CD4-positive, alpha-beta memory T cell (primary cell): ENCODE measurements at regions of chr1 and their contacts with region 1.

Region 1: DNA sequence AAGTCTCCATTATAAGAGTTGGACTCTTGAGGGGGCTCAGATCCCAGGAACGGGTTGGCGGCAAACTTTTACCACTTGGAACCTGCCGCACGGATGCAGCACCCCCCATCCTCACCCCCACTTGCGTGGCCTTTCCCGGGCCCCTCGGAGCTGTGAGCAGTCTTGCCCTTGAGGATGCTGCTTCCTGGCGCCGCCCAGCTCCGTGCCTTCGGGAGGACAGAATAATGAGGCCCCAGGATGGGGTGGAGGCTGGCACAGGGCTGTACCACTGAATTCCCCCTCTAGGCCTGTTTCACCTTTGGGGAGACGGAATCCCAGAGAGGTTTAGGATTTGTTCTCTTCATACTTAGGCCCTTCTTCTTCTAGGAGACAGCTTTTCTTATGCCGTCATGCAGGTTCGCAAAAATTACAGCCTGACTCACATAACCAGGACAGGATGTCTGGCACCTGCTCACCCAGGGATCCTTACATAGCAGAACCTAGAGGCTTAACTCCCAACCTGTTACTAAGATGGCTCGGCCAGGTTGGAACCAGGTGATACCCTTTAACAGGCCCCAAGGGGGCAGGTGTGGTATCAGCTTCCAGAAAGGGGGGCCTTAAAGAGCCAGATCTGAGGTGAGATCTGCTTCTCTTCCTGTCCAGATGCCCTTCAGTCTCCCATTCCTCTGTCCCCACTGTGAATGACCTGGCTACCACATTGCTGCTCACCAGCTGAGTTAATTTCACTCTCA is 1.5 kb downstream of the TRNP1 start:
- DNase-seq: no peak
- H3K4me3 ChIP-seq: peak overlapping the region in 1 of 2 donors; percentile 19
- H3K4me3 Mint-ChIP-seq: peak overlapping the region; percentile 59 to 90 (median 79)
- H3K27ac ChIP-seq: no peak overlapping the region
- H3K27ac Mint-ChIP-seq: peak overlapping the region in 1 of 7 donors; percentile 52
- H3K4me1 ChIP-seq: peaks cover 13% of the 10 kb centered on the region
- H3K4me1 Mint-ChIP-seq: peaks cover 6 to 25% (median 10%) of the 10 kb centered on the region in 4 donors
- H3K27me3 ChIP-seq: peaks cover 14% of the 10 kb centered on the region
- H3K27me3 Mint-ChIP-seq: peaks cover 25 to 27% of the 10 kb centered on the region in 2 donors

Region 2: GRCh38 chr1:26874896-26875295 is 120.1 kb before region 1 on chr1:
- CTCF ChIA-PET with region 1: no interaction called
- POLR2A ChIA-PET with region 1: no interaction called
- intact Hi-C with region 1: no loop called
- DNase-seq: no peak
- H3K4me3 ChIP-seq: no peak overlapping the region
- H3K4me3 Mint-ChIP-seq: no peak overlapping the region
- H3K27ac ChIP-seq: no peak overlapping the region
- H3K27ac Mint-ChIP-seq: peak overlapping the region in 2 of 7 donors; percentile 2 to 30
- H3K4me1 ChIP-seq: no peaks in the 10 kb centered on the region
- H3K4me1 Mint-ChIP-seq: peaks cover 0 to 1% (median 0%) of the 10 kb centered on the region in 4 donors
- H3K27me3 ChIP-seq: no peaks in the 10 kb centered on the region
- H3K27me3 Mint-ChIP-seq: no peaks in the 10 kb centered on the region

Region 3: GRCh38 chr1:27097484-27097917 is 102.5 kb after region 1 on chr1:
- CTCF ChIA-PET with region 1: interaction called, 3 read pairs
- POLR2A ChIA-PET with region 1: no interaction called
- intact Hi-C with region 1: loop called (anchors 1 kb)
- DNase-seq: peak; percentile 64 to 72 (median 68)
- H3K4me3 ChIP-seq: no peak overlapping the region
- H3K4me3 Mint-ChIP-seq: no peak overlapping the region
- H3K27ac ChIP-seq: no peak overlapping the region
- H3K27ac Mint-ChIP-seq: peak overlapping the region in 1 of 7 donors; percentile 40
- H3K4me1 ChIP-seq: no peaks in the 10 kb centered on the region
- H3K4me1 Mint-ChIP-seq: peaks cover 0 to 4% (median 3%) of the 10 kb centered on the region in 4 donors
- H3K27me3 ChIP-seq: no peaks in the 10 kb centered on the region
- H3K27me3 Mint-ChIP-seq: no peaks in the 10 kb centered on the region